ENCODE measurements at regions of chr12 and their contacts with region 1.

Region 1: GRCh38 chr12:45728630-45729232 is 775 bp upstream of the ARID2 start:
- DNase-seq: peak; percentile 87
- ATAC-seq: peak; percentile 79
- H3K4me3 ChIP-seq: peak overlapping the region; percentile 74 to 97
- H3K27ac ChIP-seq: peak overlapping the region; percentile 97
- H3K4me1 ChIP-seq: peaks cover 30% of the 10 kb centered on the region; the same call in 1 of the 2 replicates
- H3K27me3 ChIP-seq: no peaks in the 10 kb centered on the region
- CTCF ChIP-seq: peak; percentile 97

Region 2: DNA sequence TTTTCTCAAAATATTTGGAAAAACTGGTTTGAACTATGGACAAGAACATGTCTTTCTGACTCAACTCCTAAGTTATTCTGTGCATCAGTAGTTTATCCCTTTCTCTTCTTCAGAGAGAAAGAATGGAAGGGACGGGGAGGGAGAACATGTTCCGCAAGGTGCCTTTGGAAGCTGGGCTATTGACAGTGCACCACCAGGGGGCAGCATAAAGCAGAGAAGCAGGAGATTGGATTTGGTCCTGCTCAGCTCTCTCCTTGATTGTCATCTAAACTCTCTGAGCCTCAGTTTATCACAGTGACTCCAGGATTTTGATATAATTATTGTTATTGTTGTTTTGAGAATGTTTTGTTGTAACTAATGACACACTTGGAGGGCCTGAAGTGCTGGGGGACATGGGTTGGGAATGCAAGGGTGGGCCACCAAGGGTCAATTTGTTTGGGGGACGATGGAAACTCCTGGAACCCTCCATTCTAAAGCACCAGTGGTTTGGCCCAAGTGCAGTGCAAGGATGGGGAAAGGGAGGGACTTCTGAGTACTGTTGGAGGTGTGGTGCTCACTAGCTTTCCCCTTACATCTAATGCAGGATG is 558.2 kb before region 1 on chr12:
- CTCF ChIA-PET with region 1: no interaction called
- POLR2A ChIA-PET with region 1: no interaction called
- in situ Hi-C with region 1: no loop called
- intact Hi-C with region 1: loop called (anchors 5 kb)
- DNase-seq: peak; percentile 74
- ATAC-seq: peak; percentile 91
- H3K4me3 ChIP-seq: no peak overlapping the region
- H3K27ac ChIP-seq: no peak overlapping the region
- H3K4me1 ChIP-seq: no peaks in the 10 kb centered on the region
- H3K27me3 ChIP-seq: no peaks in the 10 kb centered on the region
- CTCF ChIP-seq: peak; percentile 94

Region 3: GRCh38 chr12:45543906-45544315 is 184.8 kb before region 1 on chr12:
- CTCF ChIA-PET with region 1: interaction called, 10 read pairs
- POLR2A ChIA-PET with region 1: no interaction called
- in situ Hi-C with region 1: no loop called
- intact Hi-C with region 1: loop called (anchors 2 kb)
- DNase-seq: peak; percentile 73
- ATAC-seq: peak; percentile 93
- H3K4me3 ChIP-seq: no peak overlapping the region
- H3K27ac ChIP-seq: no peak overlapping the region
- H3K4me1 ChIP-seq: no peaks in the 10 kb centered on the region
- H3K27me3 ChIP-seq: no peaks in the 10 kb centered on the region; the same call in 1 of the 2 replicates
- CTCF ChIP-seq: peak; percentile 86

Region 4: DNA sequence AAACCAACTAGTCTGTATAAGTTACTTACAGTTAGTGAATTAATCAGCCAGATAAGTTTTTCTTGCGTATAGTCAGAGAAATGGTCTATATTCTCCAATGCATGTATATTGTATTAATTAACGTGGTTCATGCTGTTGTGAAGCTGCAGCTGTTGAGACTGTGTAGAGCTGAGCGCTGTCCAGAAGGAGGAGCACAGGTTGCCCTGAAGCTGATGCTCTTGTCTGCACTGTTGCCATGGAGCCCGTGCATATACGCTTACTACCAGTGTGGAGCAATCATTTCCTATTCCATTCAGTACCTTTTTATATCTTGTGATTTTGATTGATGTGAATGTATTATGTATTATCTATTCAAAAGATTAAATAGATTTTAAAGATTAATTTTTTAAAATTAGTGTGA is 73.5 kb before region 1 on chr12:
- CTCF ChIA-PET with region 1: interaction called, 3 read pairs
- POLR2A ChIA-PET with region 1: interaction called, 10 read pairs
- in situ Hi-C with region 1: no loop called
- intact Hi-C with region 1: no loop called
- DNase-seq: no peak
- ATAC-seq: no peak
- H3K4me3 ChIP-seq: no peak overlapping the region
- H3K27ac ChIP-seq: no peak overlapping the region
- H3K4me1 ChIP-seq: no peaks in the 10 kb centered on the region
- H3K27me3 ChIP-seq: no peaks in the 10 kb centered on the region
- CTCF ChIP-seq: no peak

Measured in Panc1 (cell line).